ENCODE measurements at regions of chr4 and their contacts with region 1.

Region 1: GRCh38 chr4:85084380-85085094 is 118.0 kb upstream of the WDFY3 start:
- DNase-seq: no peak
- H3K4me3 ChIP-seq: no peak overlapping the region
- H3K27ac ChIP-seq: no peak overlapping the region
- H3K4me1 ChIP-seq: no peaks in the 10 kb centered on the region
- H3K27me3 ChIP-seq: peaks cover 0 to 5% (median 0%) of the 10 kb centered on the region in 7 donors
- CTCF ChIP-seq: peak; percentile 30 to 75 (median 67)
- POLR2A ChIP-seq: no peak

Region 2: GRCh38 chr4:85747882-85748491 is 663.5 kb after region 1 on chr4:
- intact Hi-C with region 1: loop called (anchors 5 kb)
- DNase-seq: no peak
- H3K4me3 ChIP-seq: no peak overlapping the region
- H3K27ac ChIP-seq: peak overlapping the region in 1 of 8 donors; percentile 16
- H3K4me1 ChIP-seq: peaks cover under 1 to 81% (median 41%) of the 10 kb centered on the region in 6 donors
- H3K27me3 ChIP-seq: no peaks in the 10 kb centered on the region
- CTCF ChIP-seq: peak; percentile 61 to 87 (median 83)
- POLR2A ChIP-seq: no peak

Region 3: DNA sequence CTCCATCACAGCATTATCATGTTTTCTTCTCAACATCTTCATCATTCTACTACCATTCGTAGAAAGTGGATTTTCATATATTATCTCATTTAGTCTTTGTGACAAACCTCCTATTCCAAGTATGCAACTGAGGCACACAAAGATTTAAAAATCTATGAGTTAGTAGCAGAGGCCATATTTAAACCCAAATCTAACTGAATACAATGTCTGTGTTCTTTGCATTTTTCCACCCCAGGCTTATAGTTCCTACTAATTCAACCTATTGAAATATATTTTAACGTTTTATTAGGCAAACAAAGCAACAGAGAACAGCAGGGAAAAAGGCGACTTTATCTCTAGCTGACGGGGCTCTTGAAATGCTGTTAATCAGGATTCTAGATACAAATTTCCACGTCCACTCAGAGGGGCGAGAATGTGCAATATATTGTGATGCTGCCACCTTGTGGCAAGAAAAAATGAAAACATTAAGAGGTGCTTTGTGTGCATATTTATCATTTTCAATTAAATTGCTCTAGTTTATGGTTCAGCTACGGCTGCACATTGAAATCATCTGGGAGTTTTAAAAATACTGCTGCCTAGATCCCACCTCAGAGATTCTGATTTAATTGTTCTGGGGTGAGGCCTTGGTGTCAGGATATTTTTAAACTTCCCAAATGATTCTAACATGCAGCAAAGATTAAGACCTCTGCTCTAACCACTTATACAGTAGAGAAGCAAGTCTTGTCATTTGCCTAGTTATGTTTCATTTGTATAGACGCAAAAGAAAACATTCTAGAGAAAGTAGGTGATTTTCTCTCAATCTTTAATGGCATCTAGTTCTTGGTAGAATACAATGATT is 959.4 kb after region 1 on chr4:
- intact Hi-C with region 1: loop called (anchors 5 kb)
- DNase-seq: no peak
- H3K4me3 ChIP-seq: no peak overlapping the region
- H3K27ac ChIP-seq: no peak overlapping the region
- H3K4me1 ChIP-seq: peaks cover 0 to 9% (median 4%) of the 10 kb centered on the region in 6 donors
- H3K27me3 ChIP-seq: no peaks in the 10 kb centered on the region
- CTCF ChIP-seq: peak in 10 of 11 experiments; percentile 26 to 71 (median 57)
- POLR2A ChIP-seq: no peak

Measured in spleen (tissue), 13 donors.